ENCODE measurements at regions of chr12 and their contacts with region 1.

Region 1: GRCh38 chr12:10153271-10154144 is 18.4 kb downstream of the OLR1 start:
- DNase-seq: peak; percentile 90

Region 2: GRCh38 chr12:10190558-10191388 is 37.3 kb after region 1 on chr12:
- intact Hi-C with region 1: loop called (anchors 1 kb)
- DNase-seq: no peak

Region 3: GRCh38 chr12:10212201-10213131 is 59.0 kb after region 1 on chr12 and contains the start of gene GABARAPL1:
- intact Hi-C with region 1: loop called (anchors 1 kb)
- DNase-seq: peak; percentile 99
- total RNA-seq, gene GABARAPL1: 280 TPM

Measured in cardiac septum (tissue), 1 donor.